CD4-positive, alpha-beta memory T cell (primary cell): ENCODE measurements at regions of chr3 and their contacts with region 1.

Region 1: DNA sequence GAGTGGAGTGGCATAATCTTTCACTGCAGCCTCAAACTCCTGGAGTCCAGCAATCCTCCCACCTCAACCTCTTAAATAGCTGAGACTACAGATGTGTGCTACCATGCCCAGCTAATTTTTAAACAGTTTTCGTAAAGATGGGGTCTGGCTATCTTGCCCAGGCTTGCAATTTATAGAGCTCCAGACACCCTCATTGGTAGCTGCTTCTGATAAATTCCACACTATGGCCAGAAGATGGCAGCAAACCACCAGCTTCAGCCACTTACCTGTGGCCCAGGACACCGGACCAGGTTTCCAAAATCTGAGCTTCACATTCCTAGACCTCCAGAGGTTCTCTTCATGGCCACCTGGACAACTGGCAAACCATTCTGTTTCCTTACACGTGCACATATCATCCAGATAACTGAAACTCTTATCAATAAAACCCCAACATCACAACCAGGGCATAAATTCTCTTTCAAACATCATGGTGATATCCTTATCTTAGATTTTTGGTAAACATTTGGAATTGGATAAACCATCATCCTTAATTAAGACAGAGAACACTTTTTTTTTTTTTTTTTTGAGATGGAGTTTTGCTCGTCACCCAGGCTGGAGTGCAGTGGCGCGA is 28.9 kb downstream of the FBXW12 start:
- DNase-seq: peak; percentile 67 to 77 (median 72)
- H3K4me3 ChIP-seq: no peak overlapping the region
- H3K4me3 Mint-ChIP-seq: no peak overlapping the region
- H3K27ac ChIP-seq: no peak overlapping the region
- H3K27ac Mint-ChIP-seq: peak overlapping the region in 2 of 7 donors; percentile 3 to 8
- H3K4me1 ChIP-seq: no peaks in the 10 kb centered on the region
- H3K4me1 Mint-ChIP-seq: peaks cover 0 to 2% (median 0%) of the 10 kb centered on the region in 4 donors
- H3K27me3 ChIP-seq: no peaks in the 10 kb centered on the region
- H3K27me3 Mint-ChIP-seq: peaks cover under 1 to 2% of the 10 kb centered on the region in 2 donors

Region 2: GRCh38 chr3:48338635-48339034 is 62.3 kb before region 1 on chr3:
- CTCF ChIA-PET with region 1: no interaction called
- POLR2A ChIA-PET with region 1: no interaction called
- intact Hi-C with region 1: no loop called
- DNase-seq: no peak
- H3K4me3 ChIP-seq: no peak overlapping the region
- H3K4me3 Mint-ChIP-seq: no peak overlapping the region
- H3K27ac ChIP-seq: no peak overlapping the region
- H3K27ac Mint-ChIP-seq: no peak overlapping the region
- H3K4me1 ChIP-seq: no peaks in the 10 kb centered on the region
- H3K4me1 Mint-ChIP-seq: peaks cover 0 to 2% (median 0%) of the 10 kb centered on the region in 4 donors
- H3K27me3 ChIP-seq: no peaks in the 10 kb centered on the region
- H3K27me3 Mint-ChIP-seq: peaks cover 16 to 25% of the 10 kb centered on the region in 2 donors

Region 3: DNA sequence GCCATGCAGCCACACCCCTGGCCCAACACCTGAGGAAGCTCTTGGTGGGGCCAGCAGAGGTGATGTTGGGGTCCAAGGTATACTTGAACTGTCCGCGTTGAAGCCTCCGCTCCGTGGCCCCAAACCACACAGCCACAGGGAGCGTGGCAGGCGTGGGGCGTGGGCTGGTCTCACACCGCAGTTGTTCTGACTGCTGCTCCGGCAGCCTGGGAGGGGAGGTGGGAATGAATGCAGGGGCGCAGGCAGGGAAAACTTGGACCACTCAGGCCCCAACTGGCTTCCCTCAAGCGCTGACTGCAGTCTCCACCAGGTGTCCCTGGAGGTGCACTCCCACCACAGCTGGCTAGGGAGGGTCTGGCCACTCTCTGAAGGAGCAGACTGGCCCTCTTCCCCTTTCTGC is 14.6 kb after region 1 on chr3:
- CTCF ChIA-PET with region 1: interaction called, 12 read pairs
- POLR2A ChIA-PET with region 1: no interaction called
- intact Hi-C with region 1: no loop called
- DNase-seq: no peak
- H3K4me3 ChIP-seq: no peak overlapping the region
- H3K4me3 Mint-ChIP-seq: no peak overlapping the region
- H3K27ac ChIP-seq: no peak overlapping the region
- H3K27ac Mint-ChIP-seq: no peak overlapping the region
- H3K4me1 ChIP-seq: no peaks in the 10 kb centered on the region
- H3K4me1 Mint-ChIP-seq: no peaks in the 10 kb centered on the region
- H3K27me3 ChIP-seq: no peaks in the 10 kb centered on the region
- H3K27me3 Mint-ChIP-seq: no peaks in the 10 kb centered on the region

Region 4: GRCh38 chr3:48500656-48501055 is 99.7 kb after region 1 on chr3:
- CTCF ChIA-PET with region 1: interaction called, 155 read pairs
- POLR2A ChIA-PET with region 1: no interaction called
- intact Hi-C with region 1: no loop called
- DNase-seq: no peak
- H3K4me3 ChIP-seq: no peak overlapping the region
- H3K4me3 Mint-ChIP-seq: peak overlapping the region in 1 of 8 donors; percentile 25
- H3K27ac ChIP-seq: no peak overlapping the region
- H3K27ac Mint-ChIP-seq: peak overlapping the region in 4 of 7 donors; percentile 56 to 86 (median 74)
- H3K4me1 ChIP-seq: peaks cover 45% of the 10 kb centered on the region
- H3K4me1 Mint-ChIP-seq: peaks cover 30 to 52% (median 42%) of the 10 kb centered on the region in 4 donors
- H3K27me3 ChIP-seq: no peaks in the 10 kb centered on the region
- H3K27me3 Mint-ChIP-seq: no peaks in the 10 kb centered on the region

Region 5: GRCh38 chr3:48536785-48537184 is 135.9 kb after region 1 on chr3:
- CTCF ChIA-PET with region 1: interaction called, 14 read pairs
- POLR2A ChIA-PET with region 1: no interaction called
- intact Hi-C with region 1: no loop called
- DNase-seq: no peak
- H3K4me3 ChIP-seq: no peak overlapping the region
- H3K4me3 Mint-ChIP-seq: no peak overlapping the region
- H3K27ac ChIP-seq: no peak overlapping the region
- H3K27ac Mint-ChIP-seq: no peak overlapping the region
- H3K4me1 ChIP-seq: no peaks in the 10 kb centered on the region
- H3K4me1 Mint-ChIP-seq: peaks cover 0 to 7% (median 0%) of the 10 kb centered on the region in 4 donors
- H3K27me3 ChIP-seq: no peaks in the 10 kb centered on the region
- H3K27me3 Mint-ChIP-seq: no peaks in the 10 kb centered on the region

Region 6: DNA sequence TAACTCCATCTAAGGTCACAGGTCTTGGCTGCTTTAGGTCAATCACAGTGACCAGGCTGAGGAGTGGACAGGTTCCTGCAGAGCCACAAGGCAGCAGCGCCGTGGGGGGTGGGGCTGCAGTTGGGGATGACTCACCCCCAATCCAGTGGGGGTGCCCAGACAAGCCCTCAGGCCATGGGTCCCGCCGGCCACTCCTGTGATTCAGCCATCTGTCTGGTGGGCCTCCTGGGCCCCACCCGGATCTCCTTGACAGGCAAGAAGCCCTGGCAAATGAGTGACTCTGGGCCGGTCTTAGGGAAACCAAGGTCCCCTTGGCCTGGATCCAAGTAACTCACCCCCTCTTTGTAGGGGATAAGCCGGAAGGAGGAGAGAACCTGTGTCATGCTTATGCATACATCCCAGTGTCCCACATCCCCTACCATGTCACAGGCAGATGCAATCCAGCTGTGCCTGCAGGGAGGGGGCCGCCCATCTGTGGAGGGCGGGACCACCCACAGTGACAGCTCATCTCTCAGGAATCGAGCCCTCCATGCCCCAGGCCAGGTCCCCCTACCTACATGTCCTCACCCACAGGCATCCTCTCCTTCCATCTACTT is 194.7 kb after region 1 on chr3:
- CTCF ChIA-PET with region 1: no interaction called
- POLR2A ChIA-PET with region 1: no interaction called
- intact Hi-C with region 1: no loop called
- DNase-seq: peak in 1 of 5 donors; percentile 39
- H3K4me3 ChIP-seq: no peak overlapping the region
- H3K4me3 Mint-ChIP-seq: no peak overlapping the region
- H3K27ac ChIP-seq: no peak overlapping the region
- H3K27ac Mint-ChIP-seq: no peak overlapping the region
- H3K4me1 ChIP-seq: no peaks in the 10 kb centered on the region
- H3K4me1 Mint-ChIP-seq: peaks cover 0 to 6% (median 3%) of the 10 kb centered on the region in 4 donors
- H3K27me3 ChIP-seq: no peaks in the 10 kb centered on the region
- H3K27me3 Mint-ChIP-seq: peaks cover 6 to 13% of the 10 kb centered on the region in 2 donors

Region 7: DNA sequence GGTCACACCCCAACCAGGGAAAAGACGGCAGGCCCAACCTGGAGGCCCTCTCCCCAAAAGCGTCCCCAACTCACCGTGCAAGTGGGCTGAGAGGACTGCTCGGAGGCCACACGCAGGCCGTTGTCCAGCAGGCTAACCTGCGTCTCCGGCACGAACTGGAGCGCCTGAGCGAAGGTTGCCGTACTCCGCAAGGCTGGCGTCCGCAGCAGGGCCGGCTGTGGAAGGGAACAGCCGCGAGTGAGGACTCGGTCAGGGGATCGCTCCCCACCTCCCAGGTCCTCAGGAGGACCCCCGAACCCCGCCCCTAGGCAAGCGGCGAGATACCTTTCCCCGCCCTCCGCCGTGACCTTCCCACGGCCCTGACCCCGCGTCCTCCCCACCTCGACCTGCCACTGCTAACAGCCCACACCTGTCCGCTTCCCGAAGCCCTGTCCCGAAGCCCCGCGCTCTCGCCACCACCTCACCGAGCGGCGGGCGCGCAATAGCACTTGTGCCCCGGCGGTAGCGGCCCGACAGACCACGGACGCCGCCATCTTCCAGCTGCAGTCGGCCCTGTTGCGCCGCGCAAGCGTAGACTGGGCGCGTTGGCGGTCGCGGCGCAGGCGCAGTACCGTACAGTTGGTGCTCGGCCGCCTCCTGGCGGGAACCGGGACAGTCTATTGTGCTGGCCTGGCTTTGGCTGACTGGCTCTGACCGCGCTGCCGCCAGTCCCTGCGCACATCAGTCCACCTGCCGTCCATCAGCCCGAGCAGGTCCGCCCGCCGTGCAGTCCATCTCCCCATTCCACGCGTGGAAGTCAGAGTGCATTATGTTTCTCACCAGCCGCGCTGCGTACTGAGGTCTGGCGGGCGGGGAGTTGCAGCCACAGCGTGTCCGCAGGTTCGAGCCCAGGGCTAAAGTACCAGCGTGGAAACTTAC is 208.4 kb after region 1 on chr3 and contains the start of gene UQCRC1:
- CTCF ChIA-PET with region 1: interaction called, 19 read pairs
- POLR2A ChIA-PET with region 1: interaction called, 3 read pairs
- intact Hi-C with region 1: loop called (anchors 1 kb)
- DNase-seq: peak; percentile 87 to 94 (median 93)
- H3K4me3 ChIP-seq: peak within 1 kb of the TSS; percentile 76 to 83
- H3K4me3 Mint-ChIP-seq: peak within 1 kb of the TSS; percentile 93 to 100 (median 98)
- H3K27ac ChIP-seq: peak within 1 kb of the TSS; percentile 89
- H3K27ac Mint-ChIP-seq: peak within 1 kb of the TSS; percentile 95 to 100 (median 98)
- H3K4me1 ChIP-seq: peaks cover 10% of the 10 kb centered on the region
- H3K4me1 Mint-ChIP-seq: peaks cover 12 to 24% (median 19%) of the 10 kb centered on the region in 4 donors
- H3K27me3 ChIP-seq: no peaks in the 10 kb centered on the region
- H3K27me3 Mint-ChIP-seq: no peaks in the 10 kb centered on the region
- total RNA-seq, gene UQCRC1: 73.7 to 91.3 TPM

Region 8: GRCh38 chr3:49869525-49870126 is 1468.7 kb after region 1 on chr3 and contains the start of gene CAMKV:
- CTCF ChIA-PET with region 1: no interaction called
- POLR2A ChIA-PET with region 1: no interaction called
- intact Hi-C with region 1: no loop called
- DNase-seq: peak in 2 of 5 donors; percentile 22 to 24
- H3K4me3 ChIP-seq: peak within 1 kb of the TSS in 1 of 2 donors; percentile 28
- H3K4me3 Mint-ChIP-seq: peak within 1 kb of the TSS; percentile 35 to 67 (median 48)
- H3K27ac ChIP-seq: no peak within 1 kb of the TSS
- H3K27ac Mint-ChIP-seq: no peak within 1 kb of the TSS
- H3K4me1 ChIP-seq: peaks cover 17% of the 10 kb centered on the region
- H3K4me1 Mint-ChIP-seq: peaks cover 1 to 24% (median 11%) of the 10 kb centered on the region in 4 donors
- H3K27me3 ChIP-seq: peaks cover 23% of the 10 kb centered on the region
- H3K27me3 Mint-ChIP-seq: peaks cover 17% of the 10 kb centered on the region in 2 donors
- total RNA-seq, gene CAMKV: not detected